HCT116 (cell line): ENCODE measurements at regions of chr3 and their contacts with region 1.

Region 1: DNA sequence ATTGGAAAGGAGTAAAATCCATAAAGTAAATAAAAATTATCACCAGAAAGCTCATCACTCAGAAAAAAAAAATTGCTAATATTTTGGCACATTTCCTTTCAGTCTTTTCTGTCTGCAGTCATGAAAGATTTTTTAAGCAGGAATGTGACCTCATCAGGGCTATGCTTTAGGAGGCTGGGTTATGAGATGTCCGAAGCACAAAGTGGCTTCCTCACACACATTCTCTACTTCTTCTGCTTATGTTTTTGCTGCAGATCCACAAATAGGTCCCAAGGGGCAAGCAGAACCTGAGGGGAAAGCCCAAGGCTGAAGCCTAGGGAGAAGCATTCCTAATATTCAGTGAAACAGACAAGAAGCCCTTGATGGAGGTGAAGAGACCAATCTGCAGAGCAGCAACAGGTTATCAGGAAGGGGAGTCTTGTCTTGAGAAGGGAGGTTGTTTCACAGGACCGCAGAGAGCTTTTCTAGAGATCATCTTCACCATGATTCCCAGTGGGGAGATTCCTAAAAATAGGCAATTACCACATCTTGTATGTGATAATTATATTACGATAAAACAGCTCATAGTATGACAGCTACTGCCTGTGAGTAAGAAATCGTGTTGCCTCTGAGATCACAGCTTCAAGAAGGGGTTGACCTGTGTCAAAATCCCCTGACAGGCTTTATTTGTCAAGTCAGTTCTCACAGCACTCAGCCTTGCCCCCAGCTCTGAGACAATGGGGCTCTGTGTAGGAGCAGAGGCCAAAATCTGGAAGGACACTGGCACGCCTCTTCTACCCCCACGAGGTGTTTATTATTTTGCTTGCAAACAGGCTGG is 60.5 kb downstream of the IGF2BP2 start:
- DNase-seq: no peak
- ATAC-seq: no peak
- H3K4me3 ChIP-seq: no peak overlapping the region
- H3K27ac ChIP-seq: no peak overlapping the region
- H3K4me1 ChIP-seq: peaks cover 3 to 42% of the 10 kb centered on the region in 2 experiments; a peak in 3 of 4 replicates
- H3K27me3 ChIP-seq: no peaks in the 10 kb centered on the region
- CTCF ChIP-seq: no peak
- POLR2A ChIP-seq: no peak
- RAD21 ChIP-seq: no peak

Region 2: GRCh38 chr3:185677146-185677829 is 87.1 kb before region 1 on chr3:
- CTCF ChIA-PET with region 1: interaction called, 15 read pairs
- POLR2A ChIA-PET with region 1: no interaction called
- RAD21 ChIA-PET with region 1: no interaction called
- intact Hi-C with region 1: loop called (anchors 5 kb)
- DNase-seq: peak; percentile 69
- ATAC-seq: peak; percentile 94
- H3K4me3 ChIP-seq: no peak overlapping the region
- H3K27ac ChIP-seq: no peak overlapping the region
- H3K4me1 ChIP-seq: peaks cover 0 to 5% of the 10 kb centered on the region in 2 experiments; a peak in 1 of 4 replicates
- H3K27me3 ChIP-seq: no peaks in the 10 kb centered on the region
- CTCF ChIP-seq: peak; percentile 62 to 78 (median 71); a peak in 5 of 6 replicates
- POLR2A ChIP-seq: no peak
- RAD21 ChIP-seq: peak; percentile 85

Region 3: GRCh38 chr3:185733980-185734724 is 30.2 kb before region 1 on chr3:
- CTCF ChIA-PET with region 1: interaction called, 32 read pairs
- POLR2A ChIA-PET with region 1: no interaction called
- RAD21 ChIA-PET with region 1: no interaction called
- intact Hi-C with region 1: no loop called
- DNase-seq: peak; percentile 83
- ATAC-seq: peak; percentile 96
- H3K4me3 ChIP-seq: no peak overlapping the region
- H3K27ac ChIP-seq: no peak overlapping the region
- H3K4me1 ChIP-seq: peaks cover 19 to 70% of the 10 kb centered on the region in 2 experiments
- H3K27me3 ChIP-seq: no peaks in the 10 kb centered on the region
- CTCF ChIP-seq: peak; percentile 70 to 78 (median 72)
- POLR2A ChIP-seq: no peak
- RAD21 ChIP-seq: peak; percentile 89

Region 4: GRCh38 chr3:185781759-185782158 is 17.4 kb after region 1 on chr3:
- CTCF ChIA-PET with region 1: interaction called, 18 read pairs
- POLR2A ChIA-PET with region 1: no interaction called
- RAD21 ChIA-PET with region 1: no interaction called
- intact Hi-C with region 1: no loop called
- DNase-seq: no peak
- ATAC-seq: peak; percentile 55
- H3K4me3 ChIP-seq: no peak overlapping the region
- H3K27ac ChIP-seq: no peak overlapping the region
- H3K4me1 ChIP-seq: peaks cover 63 to 86% of the 10 kb centered on the region in 2 experiments
- H3K27me3 ChIP-seq: no peaks in the 10 kb centered on the region
- CTCF ChIP-seq: no peak
- POLR2A ChIP-seq: no peak
- RAD21 ChIP-seq: no peak